BJ (cell line): ENCODE measurements at regions of chr4 and their contacts with region 1.

Region 1: GRCh38 chr4:6802025-6802424 is 19.5 kb downstream of the KIAA0232 start:
- DNase-seq: no peak
- H3K4me3 ChIP-seq: no peak overlapping the region
- H3K27me3 ChIP-seq: no peaks in the 10 kb centered on the region
- CTCF ChIP-seq: no peak

Region 2: GRCh38 chr4:6761649-6762602 is 40.1 kb before region 1 on chr4:
- CTCF ChIA-PET with region 1: no interaction called
- POLR2A ChIA-PET with region 1: no interaction called
- DNase-seq: no peak
- H3K4me3 ChIP-seq: no peak overlapping the region
- H3K27me3 ChIP-seq: peaks cover 18% of the 10 kb centered on the region
- CTCF ChIP-seq: no peak

Region 3: GRCh38 chr4:6783053-6783981 is 18.7 kb before region 1 on chr4:
- CTCF ChIA-PET with region 1: interaction called, 10 read pairs
- POLR2A ChIA-PET with region 1: no interaction called
- DNase-seq: peak; percentile 23
- H3K4me3 ChIP-seq: peak overlapping the region; percentile 94
- H3K27me3 ChIP-seq: no peaks in the 10 kb centered on the region; the same call in 1 of the 2 replicates
- CTCF ChIP-seq: peak; percentile 16

Region 4: GRCh38 chr4:6953751-6954380 is 151.8 kb after region 1 on chr4:
- CTCF ChIA-PET with region 1: no interaction called
- POLR2A ChIA-PET with region 1: interaction called, 19 read pairs
- DNase-seq: peak; percentile 11
- H3K4me3 ChIP-seq: peak overlapping the region; percentile 6; the same call in 1 of the 2 replicates
- H3K27me3 ChIP-seq: no peaks in the 10 kb centered on the region
- CTCF ChIP-seq: no peak